ENCODE measurements at regions of chr3 and their contacts with region 1.

Region 1: DNA sequence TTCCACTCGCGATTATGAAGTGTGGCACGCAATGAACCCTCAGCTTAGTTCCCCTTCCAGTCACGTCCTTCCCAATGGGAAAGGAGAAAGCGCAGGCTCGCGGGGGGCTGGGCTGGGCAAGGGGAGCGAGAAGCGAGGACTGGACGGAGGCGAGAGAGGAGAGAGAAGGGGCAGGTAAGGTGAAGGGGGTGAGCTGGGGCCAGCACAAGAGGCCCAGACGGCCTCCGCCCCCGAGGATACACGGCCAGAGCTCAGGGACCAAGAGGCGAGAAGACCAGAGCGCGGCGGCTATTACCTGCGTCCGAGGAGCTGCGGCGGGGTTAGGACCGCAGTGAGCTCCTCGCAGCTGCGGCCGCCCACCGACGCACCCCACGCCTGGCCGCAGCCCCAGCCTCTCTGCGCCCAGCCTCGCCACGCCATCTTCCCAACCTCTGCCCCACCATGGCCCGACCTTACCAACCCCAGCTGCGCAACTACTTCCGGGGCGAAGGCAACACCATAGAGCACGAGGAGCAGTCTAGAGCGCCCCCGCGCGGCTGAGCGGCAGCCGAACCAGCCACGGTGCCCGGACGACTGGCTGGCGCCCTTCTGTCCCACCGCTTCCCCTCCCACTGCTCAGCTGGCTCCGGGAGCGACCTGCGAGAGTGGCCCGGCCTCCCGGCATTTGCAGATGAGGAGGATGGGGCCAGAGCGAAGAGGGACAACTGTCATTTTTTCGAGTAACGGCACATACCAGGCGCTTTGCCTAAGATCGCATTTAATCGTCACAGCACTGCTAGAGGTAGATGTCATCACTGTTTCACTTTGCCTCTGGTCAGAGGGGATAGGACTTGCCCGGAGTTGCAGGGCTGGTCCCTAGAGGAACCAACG is at the start of gene PARL:
- DNase-seq: peak; percentile 90 to 99
- H3K4me3 ChIP-seq: peak within 1 kb of the TSS; percentile 74 to 92 (median 88)
- H3K27ac ChIP-seq: peak within 1 kb of the TSS; percentile 81
- H3K4me1 ChIP-seq: peaks cover 0 to 2% (median 0%) of the 10 kb centered on the region in 4 experiments; a peak in 1 of 7 replicates
- H3K27me3 ChIP-seq: peaks cover 0 to 2% (median 0%) of the 10 kb centered on the region in 4 experiments; a peak in 1 of 7 replicates
- CTCF ChIP-seq: peak; percentile 88 to 98 (median 92)
- EP300 ChIP-seq: peak in 1 of 2 experiments; percentile 92; a peak in 1 of 3 replicates
- POLR2A ChIP-seq: peak; percentile 66 to 97
- RAD21 ChIP-seq: peak; percentile 74 to 75
- total RNA-seq, gene PARL: 81.3 and 85.0 TPM in 2 replicates

Region 2: GRCh38 chr3:183825456-183826161 is 59.1 kb before region 1 on chr3 and contains the start of gene MAP6D1:
- CTCF ChIA-PET with region 1: interaction called, 11 read pairs
- POLR2A ChIA-PET with region 1: interaction called, 3 read pairs
- DNase-seq: peak; percentile 31 to 85
- H3K4me3 ChIP-seq: peak within 1 kb of the TSS; percentile 60 to 79 (median 68)
- H3K27ac ChIP-seq: no peak within 1 kb of the TSS
- H3K4me1 ChIP-seq: peaks cover 0 to 7% (median 3%) of the 10 kb centered on the region in 4 experiments; a peak in 4 of 7 replicates
- H3K27me3 ChIP-seq: peaks cover 0 to 3% (median 0%) of the 10 kb centered on the region in 4 experiments; a peak in 3 of 7 replicates
- CTCF ChIP-seq: peak in 2 of 3 experiments; percentile 43 to 64; a peak in 3 of 4 replicates
- EP300 ChIP-seq: no peak
- POLR2A ChIP-seq: no peak
- RAD21 ChIP-seq: peak; percentile 27 to 48; a peak in 3 of 4 replicates
- total RNA-seq, gene MAP6D1: 4.1 and 5.2 TPM in 2 replicates

Region 3: GRCh38 chr3:183870563-183870962 is 14.1 kb before region 1 on chr3:
- CTCF ChIA-PET with region 1: interaction called, 6 read pairs
- POLR2A ChIA-PET with region 1: interaction called, 10 read pairs
- DNase-seq: peak in 1 of 2 experiments; percentile 10
- H3K4me3 ChIP-seq: no peak overlapping the region
- H3K27ac ChIP-seq: no peak overlapping the region
- H3K4me1 ChIP-seq: no peaks in the 10 kb centered on the region
- H3K27me3 ChIP-seq: no peaks in the 10 kb centered on the region
- CTCF ChIP-seq: no peak
- EP300 ChIP-seq: no peak
- POLR2A ChIP-seq: no peak
- RAD21 ChIP-seq: no peak

Region 4: DNA sequence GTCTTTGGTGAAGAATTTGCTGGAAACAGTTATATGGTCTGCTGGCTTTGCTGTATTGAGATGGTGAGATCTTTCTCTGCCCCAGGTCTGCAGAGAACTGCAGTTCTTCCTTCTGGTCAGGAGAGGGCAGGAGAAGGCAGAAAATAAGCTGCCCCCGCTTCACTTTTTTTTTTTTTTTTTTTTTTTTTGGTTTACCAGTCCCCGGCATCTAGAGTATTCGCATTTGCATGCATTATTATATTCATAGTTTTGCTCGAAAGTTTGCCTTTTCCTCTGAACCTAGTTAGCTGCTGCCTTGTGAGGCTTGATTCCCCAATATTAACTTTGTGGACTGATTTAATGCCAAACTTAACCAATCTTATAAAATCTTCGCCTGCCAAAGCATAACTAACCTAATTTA is 10.6 kb after region 1 on chr3:
- CTCF ChIA-PET with region 1: interaction called, 12 read pairs
- POLR2A ChIA-PET with region 1: no interaction called
- DNase-seq: no peak
- H3K4me3 ChIP-seq: no peak overlapping the region
- H3K27ac ChIP-seq: no peak overlapping the region
- H3K4me1 ChIP-seq: peaks cover 0 to 3% (median 0%) of the 10 kb centered on the region in 4 experiments; a peak in 3 of 7 replicates
- H3K27me3 ChIP-seq: no peaks in the 10 kb centered on the region
- CTCF ChIP-seq: peak; percentile 45 to 79 (median 78)
- EP300 ChIP-seq: no peak
- POLR2A ChIP-seq: no peak
- RAD21 ChIP-seq: peak; percentile 88 to 93